Right ventricle myocardium superior (tissue), 1 donor: ENCODE measurements at regions of chr13 and their contacts with region 1.

Region 1: DNA sequence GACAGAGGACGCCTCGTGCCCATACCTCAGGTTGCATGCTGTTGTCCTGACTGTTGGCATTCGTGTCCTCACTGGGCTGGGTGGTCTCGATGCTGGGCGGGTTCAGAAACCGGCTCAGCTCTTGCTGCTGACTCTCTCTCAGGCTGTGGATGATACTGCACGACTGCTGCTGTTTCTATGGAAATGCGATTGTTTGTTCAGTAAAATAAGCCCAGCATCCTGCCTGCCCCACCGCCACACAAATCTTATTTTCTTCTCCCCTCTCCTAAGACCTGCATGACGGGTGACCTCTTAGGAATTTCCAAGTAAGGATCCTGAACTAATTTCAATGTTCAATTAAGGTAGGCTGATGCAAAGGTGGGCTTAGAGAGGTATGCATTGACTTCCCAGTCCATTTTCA is 356.5 kb downstream of the NALCN start:
- DNase-seq: no peak
- ATAC-seq: no peak

Region 2: DNA sequence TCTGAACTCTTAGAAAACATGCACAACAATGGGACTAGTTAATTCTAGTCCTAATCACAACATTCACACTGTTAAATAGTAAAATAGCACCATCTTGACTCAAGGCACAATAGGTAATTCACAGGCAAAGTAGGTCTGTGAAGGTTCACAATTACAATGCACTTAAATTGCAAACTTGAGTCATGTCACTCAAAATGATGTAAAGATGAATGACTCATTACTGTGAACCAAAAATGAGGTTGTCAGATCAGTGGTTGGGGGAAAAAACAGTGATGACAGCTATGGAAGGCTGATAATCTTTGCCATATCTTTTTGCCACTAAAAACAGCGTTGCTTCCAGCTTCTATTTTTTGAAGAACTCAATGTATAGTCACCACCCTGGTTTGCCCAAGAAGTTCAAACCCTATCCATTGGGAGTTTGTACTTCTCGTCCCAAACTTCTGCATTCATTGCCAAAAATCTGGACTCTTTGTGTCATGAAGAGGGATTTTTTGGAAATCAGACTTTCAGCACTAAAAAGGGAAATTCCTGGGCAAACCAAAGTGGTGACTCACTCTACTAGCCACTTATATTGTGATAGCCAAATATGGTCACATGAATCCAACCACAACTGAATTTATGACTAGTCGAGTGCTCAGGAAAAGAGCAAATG is 184.3 kb before region 1 on chr13:
- intact Hi-C with region 1: no loop called
- DNase-seq: no peak
- ATAC-seq: no peak

Region 3: GRCh38 chr13:101092985-101093384 is 33.2 kb after region 1 on chr13:
- intact Hi-C with region 1: loop called (anchors 2 kb)
- DNase-seq: no peak
- ATAC-seq: no peak